Mammary epithelial cell (primary cell): ENCODE measurements at regions of chr3 and their contacts with region 1.

Region 1: DNA sequence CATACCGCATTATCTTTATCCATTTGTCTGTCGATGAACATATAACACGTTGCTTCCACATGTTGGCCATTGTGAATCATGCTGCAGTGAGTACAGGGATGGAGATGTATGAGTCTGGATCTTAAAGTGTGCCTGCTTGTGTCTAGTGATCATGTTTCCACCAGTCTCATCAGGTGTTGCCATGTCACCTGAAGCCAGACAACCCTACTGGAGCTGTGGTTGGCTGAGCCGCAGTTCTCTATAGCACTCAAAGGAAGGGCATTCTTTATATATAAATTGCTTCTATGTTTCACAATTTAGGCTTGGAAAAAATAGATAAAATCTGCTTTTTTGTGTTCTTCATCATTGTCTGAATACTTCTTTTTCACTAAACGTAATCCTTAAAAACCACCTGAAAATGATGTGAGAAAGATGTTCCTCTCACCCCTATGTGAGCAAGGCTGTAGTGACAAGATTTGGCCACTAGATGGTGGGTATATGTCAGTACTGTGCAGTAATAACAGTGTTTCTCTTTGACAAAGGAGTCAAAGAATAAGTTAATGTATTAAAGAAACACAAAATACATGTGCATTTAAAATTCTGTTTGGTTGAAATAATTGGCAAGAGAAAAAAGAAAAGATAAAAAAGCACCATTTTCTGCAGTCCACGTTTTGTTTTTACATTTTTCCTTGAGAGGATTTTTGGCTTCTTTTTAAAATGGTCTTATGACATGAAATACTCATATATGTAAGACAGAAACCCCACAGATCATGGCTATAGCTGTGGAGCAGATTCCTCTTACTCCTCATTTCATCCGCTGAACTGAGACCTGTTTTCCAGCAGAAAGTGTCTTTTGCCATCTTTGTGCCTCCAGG is 394.5 kb upstream of the DPPA4 start:
- DNase-seq: peak; percentile 39
- H3K4me3 ChIP-seq: no peak overlapping the region
- H3K27ac ChIP-seq: no peak overlapping the region
- H3K4me1 ChIP-seq: no peaks in the 10 kb centered on the region
- H3K27me3 ChIP-seq: peaks cover 2% of the 10 kb centered on the region
- CTCF ChIP-seq: peak; percentile 88 to 98

Region 2: DNA sequence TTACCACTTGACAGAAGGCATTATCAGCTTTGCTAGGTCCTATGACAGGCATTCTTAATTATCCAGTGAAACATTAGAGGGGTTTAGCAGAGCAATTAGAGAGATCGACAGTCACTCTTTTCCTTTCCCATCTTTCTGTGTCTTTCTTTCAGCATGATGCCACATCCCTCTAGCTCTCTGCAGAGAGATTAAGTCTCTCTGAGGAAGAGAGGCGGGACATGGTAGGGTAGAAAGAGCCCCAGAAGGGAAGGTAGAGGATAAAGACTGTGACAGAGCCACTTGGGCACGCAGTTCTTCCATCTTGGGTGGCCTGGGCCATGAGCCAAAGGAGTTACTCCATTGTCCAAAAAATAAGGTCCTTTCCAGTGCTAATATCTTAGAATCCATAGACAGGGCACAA is 1379.7 kb before region 1 on chr3:
- CTCF ChIA-PET with region 1: no interaction called
- dilution Hi-C with region 1: no loop called
- in situ Hi-C with region 1: no loop called
- intact Hi-C with region 1: no loop called
- DNase-seq: no peak
- H3K4me3 ChIP-seq: no peak overlapping the region
- H3K27ac ChIP-seq: no peak overlapping the region
- H3K4me1 ChIP-seq: no peaks in the 10 kb centered on the region
- H3K27me3 ChIP-seq: no peaks in the 10 kb centered on the region
- CTCF ChIP-seq: no peak

Region 3: GRCh38 chr3:109532257-109533216 is 199.3 kb before region 1 on chr3:
- CTCF ChIA-PET with region 1: no interaction called
- dilution Hi-C with region 1: no loop called
- in situ Hi-C with region 1: no loop called
- intact Hi-C with region 1: loop called (anchors 2 kb)
- DNase-seq: peak; percentile 69
- H3K4me3 ChIP-seq: no peak overlapping the region
- H3K27ac ChIP-seq: no peak overlapping the region
- H3K4me1 ChIP-seq: no peaks in the 10 kb centered on the region
- H3K27me3 ChIP-seq: no peaks in the 10 kb centered on the region
- CTCF ChIP-seq: peak; percentile 18 to 60

Region 4: DNA sequence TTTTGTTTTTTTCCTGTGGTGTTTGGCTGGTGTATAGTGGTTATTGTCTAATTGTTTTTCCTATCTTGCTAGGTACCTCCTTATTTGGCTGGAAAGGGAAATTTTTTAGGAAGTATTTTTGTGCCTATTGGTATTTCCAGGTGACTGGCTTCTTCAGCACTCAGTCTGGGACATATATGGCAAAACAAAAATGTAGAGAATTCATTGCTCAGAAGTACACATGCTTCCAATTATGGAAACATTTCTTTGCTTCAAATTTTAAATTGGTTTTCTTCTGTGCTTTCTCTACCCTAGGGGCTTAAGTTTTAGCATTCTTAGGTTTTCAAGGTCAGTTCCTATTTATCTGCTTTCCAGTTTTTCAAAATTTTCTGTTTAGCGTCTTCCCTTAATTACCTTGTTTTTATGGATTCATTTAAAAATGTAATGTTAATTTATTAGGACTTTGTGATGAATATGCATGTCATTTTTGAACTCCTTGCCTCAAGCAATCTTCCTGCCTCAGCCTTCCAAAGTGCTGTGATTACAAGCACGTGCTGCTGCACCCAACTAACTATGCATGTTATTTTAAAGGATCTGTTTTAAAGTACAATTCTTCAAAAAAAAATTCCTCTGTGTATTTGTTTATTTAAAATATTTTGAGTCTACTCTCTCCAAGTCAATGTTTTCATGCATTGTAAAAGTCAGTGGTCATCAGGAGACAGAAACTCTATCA is 162.6 kb before region 1 on chr3:
- CTCF ChIA-PET with region 1: no interaction called
- dilution Hi-C with region 1: no loop called
- in situ Hi-C with region 1: no loop called
- intact Hi-C with region 1: no loop called
- DNase-seq: no peak
- H3K4me3 ChIP-seq: no peak overlapping the region
- H3K27ac ChIP-seq: no peak overlapping the region
- H3K4me1 ChIP-seq: no peaks in the 10 kb centered on the region
- H3K27me3 ChIP-seq: no peaks in the 10 kb centered on the region
- CTCF ChIP-seq: no peak

Region 5: GRCh38 chr3:110314512-110315114 is 582.8 kb after region 1 on chr3:
- CTCF ChIA-PET with region 1: no interaction called
- dilution Hi-C with region 1: no loop called
- in situ Hi-C with region 1: loop called (anchors 25 kb)
- intact Hi-C with region 1: loop called (anchors 1 kb)
- DNase-seq: peak; percentile 50
- H3K4me3 ChIP-seq: no peak overlapping the region
- H3K27ac ChIP-seq: no peak overlapping the region
- H3K4me1 ChIP-seq: no peaks in the 10 kb centered on the region
- H3K27me3 ChIP-seq: no peaks in the 10 kb centered on the region
- CTCF ChIP-seq: peak; percentile 81 to 91

Region 6: GRCh38 chr3:111080413-111080812 is 1348.6 kb after region 1 on chr3:
- CTCF ChIA-PET with region 1: no interaction called
- dilution Hi-C with region 1: no loop called
- in situ Hi-C with region 1: no loop called
- intact Hi-C with region 1: loop called (anchors 1 kb)
- DNase-seq: peak; percentile 26
- H3K4me3 ChIP-seq: no peak overlapping the region
- H3K27ac ChIP-seq: no peak overlapping the region
- H3K4me1 ChIP-seq: peaks cover 2% of the 10 kb centered on the region
- H3K27me3 ChIP-seq: no peaks in the 10 kb centered on the region
- CTCF ChIP-seq: peak; percentile 26 to 57

Region 7: GRCh38 chr3:111252779-111253178 is 1520.9 kb after region 1 on chr3:
- CTCF ChIA-PET with region 1: no interaction called
- dilution Hi-C with region 1: no loop called
- in situ Hi-C with region 1: no loop called
- intact Hi-C with region 1: loop called (anchors 5 kb)
- DNase-seq: no peak
- H3K4me3 ChIP-seq: no peak overlapping the region
- H3K27ac ChIP-seq: no peak overlapping the region
- H3K4me1 ChIP-seq: peaks cover 10% of the 10 kb centered on the region
- H3K27me3 ChIP-seq: no peaks in the 10 kb centered on the region
- CTCF ChIP-seq: no peak

Region 8: DNA sequence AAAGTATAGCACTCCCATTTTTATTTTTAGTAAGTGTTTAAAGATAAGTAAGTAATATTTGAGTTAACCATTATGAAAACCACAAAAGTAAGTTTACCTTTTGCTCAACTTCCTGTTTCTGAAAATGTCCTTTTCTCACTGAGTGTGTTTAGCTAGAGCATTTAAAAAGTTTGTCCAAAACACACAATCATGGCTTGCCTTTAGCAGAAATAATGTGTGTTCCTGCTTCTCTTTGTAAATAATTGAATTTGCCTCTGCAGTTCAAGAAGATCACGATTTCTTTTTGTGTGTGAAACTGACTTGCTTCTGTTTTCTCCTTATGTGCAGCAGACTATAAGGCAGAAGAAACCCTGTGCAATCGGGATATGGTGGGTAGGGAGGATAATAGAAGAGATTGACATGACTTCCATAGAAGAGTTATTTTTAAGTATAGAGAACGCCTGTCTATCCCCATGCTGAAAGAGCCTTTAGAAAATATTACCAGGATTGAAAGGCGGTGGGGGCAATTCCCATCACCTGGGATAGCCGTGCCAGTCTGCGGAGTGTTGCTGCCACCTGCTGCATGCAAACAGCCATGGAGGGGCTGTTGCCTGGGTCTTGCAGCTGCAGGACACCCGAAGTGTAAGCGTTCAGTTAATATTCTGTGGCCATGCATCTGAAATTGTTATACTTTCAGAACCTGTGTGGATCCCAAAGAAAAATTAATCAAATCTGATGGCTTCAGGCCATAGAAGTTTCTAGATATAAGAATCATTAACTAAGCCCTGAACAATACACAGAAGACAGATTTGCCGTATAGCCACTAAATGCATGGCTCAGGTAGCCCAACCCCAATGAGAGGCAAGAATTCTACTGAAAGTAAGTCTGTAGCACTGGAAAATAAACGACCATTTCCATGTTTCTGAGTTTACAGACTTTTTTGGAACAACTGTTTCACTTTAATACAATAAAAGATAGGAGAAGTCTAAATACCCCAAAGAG is 1807.8 kb after region 1 on chr3:
- CTCF ChIA-PET with region 1: no interaction called
- dilution Hi-C with region 1: no loop called
- in situ Hi-C with region 1: no loop called
- intact Hi-C with region 1: loop called (anchors 5 kb)
- DNase-seq: peak; percentile 55
- H3K4me3 ChIP-seq: no peak overlapping the region
- H3K27ac ChIP-seq: no peak overlapping the region
- H3K4me1 ChIP-seq: peaks cover 21% of the 10 kb centered on the region
- H3K27me3 ChIP-seq: no peaks in the 10 kb centered on the region
- CTCF ChIP-seq: peak; percentile 92 to 94